Dorsolateral prefrontal cortex (tissue), 120 donors: ENCODE measurements at regions of chrX and their contacts with region 1.

Region 1: GRCh38 chrX:103686199-103687072 is at the start of gene MORF4L2:
- DNase-seq: peak; percentile 45 to 93 (median 88)
- H3K4me3 ChIP-seq: peak within 1 kb of the TSS; percentile 39 to 81 (median 67)
- H3K27ac ChIP-seq: peak within 1 kb of the TSS; percentile 92 to 100 (median 99)
- H3K27me3 ChIP-seq: peaks cover 0 to 47% (median 6%) of the 10 kb centered on the region in 45 donors
- CTCF ChIP-seq: no peak
- total RNA-seq, gene MORF4L2: 141 to 473 (median 331) TPM

Region 2: DNA sequence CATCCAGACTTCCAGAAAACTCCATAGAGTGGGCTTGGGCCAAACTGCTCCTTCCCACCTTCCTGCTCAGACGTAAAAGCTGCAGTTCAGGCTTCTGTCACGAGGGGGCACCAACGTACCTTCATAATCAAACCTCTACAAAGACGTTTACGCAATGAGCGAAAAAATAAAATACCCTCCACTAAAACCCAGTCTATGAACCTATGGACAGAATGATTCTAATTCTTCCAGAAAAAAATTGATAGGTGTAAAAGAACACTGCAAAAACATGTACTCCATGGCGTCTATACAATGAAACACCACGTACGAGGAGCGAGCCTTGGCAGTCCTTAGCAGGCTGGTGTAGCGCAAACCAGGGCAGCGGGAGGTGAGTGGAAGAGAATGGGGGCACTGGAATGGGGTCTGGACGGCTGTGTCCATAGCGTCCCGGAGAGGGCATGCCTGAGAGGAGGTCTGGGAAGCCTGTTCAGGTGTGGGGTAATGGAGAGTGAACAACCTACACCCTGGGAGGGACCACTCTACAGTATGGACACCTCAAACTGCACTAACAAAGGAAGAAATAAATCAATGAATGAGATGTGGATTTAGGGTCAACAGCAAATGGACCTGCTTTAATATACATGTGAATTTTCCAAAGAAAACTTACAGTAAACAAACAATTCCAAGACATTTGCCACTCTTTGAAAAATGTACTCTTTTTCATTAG is 152.8 kb before region 1 on chrX:
- intact Hi-C with region 1: loop called (anchors 2 to 5 kb)
- DNase-seq: peak; percentile 64 to 91 (median 79)
- H3K4me3 ChIP-seq: peak overlapping the region; percentile 18 to 67 (median 51)
- H3K27ac ChIP-seq: peak overlapping the region in 36 of 59 donors; percentile 4 to 83 (median 52)
- H3K27me3 ChIP-seq: peaks cover 0 to 87% (median 17%) of the 10 kb centered on the region in 45 donors
- CTCF ChIP-seq: peak; percentile 34 to 94 (median 82)

Region 3: DNA sequence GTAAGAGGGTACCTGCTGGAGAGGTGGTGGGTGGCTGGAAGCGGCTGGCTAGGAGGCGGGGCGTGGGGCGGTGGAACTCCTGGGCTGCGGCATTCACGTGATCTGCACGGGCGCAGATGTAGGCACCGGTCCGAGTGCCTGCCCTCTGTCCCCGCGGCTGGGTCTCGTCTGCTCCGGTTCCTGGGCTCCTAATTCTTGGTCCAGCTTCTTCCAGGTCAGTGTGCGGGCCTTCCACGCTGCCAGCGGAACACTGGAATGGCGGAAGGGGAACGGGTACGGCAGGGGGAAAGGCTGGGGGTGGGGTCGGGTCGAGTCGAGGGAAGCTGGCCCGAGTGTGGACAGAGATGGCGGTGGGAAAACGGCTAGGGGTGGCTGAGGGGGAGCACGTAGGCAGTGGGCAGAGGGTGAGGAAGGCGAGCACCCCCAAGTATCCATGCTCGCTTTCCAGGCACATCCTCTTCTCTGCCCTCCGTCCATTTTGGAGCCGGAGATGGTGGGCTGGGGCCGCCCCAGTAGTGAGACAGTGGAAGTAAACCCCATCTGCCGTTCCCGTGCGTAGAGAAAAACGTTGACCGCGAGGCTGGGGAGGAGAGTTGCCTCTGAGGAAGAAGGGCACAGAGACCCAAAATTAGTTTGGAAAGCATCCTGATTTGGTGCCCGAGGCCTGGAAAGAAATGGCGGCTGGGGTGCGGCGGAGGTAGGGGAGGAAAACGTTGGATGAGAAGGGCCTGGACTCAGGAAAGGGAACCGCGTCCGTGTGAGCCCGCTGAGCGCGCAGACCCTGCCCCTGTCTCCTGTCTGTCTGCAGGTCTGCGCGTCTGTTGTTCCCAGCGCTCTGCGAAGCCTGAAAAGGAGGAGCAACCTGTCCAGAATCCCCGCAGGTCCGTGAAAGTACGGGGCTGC is 100.8 kb before region 1 on chrX and contains the start of gene TCEAL4:
- intact Hi-C with region 1: loop called in 1 of 2 experiments (anchors 10 kb)
- DNase-seq: peak; percentile 54 to 83 (median 68)
- H3K4me3 ChIP-seq: peak within 1 kb of the TSS; percentile 16 to 80 (median 64)
- H3K27ac ChIP-seq: peak within 1 kb of the TSS; percentile 41 to 92 (median 86)
- H3K27me3 ChIP-seq: peaks cover 0 to 33% (median 0%) of the 10 kb centered on the region in 45 donors
- CTCF ChIP-seq: no peak
- total RNA-seq, gene TCEAL4: 75.8 to 142 (median 106) TPM

Region 4: DNA sequence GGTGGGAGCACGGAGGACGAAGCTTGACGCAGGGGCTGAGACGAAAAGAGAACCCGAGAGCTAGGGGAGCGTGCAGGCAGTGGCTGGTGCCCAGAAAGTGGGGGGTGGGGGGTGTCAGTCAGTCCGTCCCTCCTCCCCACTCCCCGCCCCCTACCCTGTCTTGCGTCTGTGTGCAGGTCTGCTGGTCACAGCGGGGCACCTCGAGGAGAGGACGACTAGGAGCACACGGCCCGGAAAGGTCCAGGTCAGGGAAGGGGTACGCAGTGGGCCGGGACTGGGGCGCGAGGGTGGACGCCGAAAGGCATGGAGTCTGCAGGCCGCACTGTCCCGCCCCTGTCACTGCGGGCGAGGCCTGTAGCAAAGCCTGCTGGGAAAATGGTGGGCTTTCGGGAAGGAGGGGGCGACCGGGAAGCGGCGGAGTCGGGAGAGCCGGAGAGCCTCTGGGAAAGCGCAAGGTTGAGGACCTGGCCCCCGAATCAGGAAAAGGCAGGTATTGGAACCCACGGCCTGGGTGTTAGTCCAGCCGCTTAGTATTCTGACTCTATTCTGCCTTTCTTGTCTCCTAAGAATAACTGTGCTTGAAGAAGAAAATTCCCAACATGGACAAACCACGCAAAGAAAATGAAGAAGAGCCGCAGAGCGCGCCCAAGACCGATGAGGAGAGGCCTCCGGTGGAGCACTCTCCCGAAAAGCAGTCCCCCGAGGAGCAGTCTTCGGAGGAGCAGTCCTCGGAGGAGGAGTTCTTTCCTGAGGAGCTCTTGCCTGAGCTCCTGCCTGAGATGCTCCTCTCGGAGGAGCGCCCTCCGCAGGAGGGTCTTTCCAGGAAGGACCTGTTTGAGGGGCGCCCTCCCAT is 56.9 kb before region 1 on chrX:
- intact Hi-C with region 1: loop called (anchors 10 kb)
- DNase-seq: peak; percentile 48 to 77 (median 67)
- H3K4me3 ChIP-seq: peak overlapping the region; percentile 45 to 76 (median 64)
- H3K27ac ChIP-seq: peak overlapping the region; percentile 80 to 98 (median 94)
- H3K27me3 ChIP-seq: peaks cover 0 to 71% (median 17%) of the 10 kb centered on the region in 45 donors
- CTCF ChIP-seq: peak in 55 of 56 donors; percentile 29 to 70 (median 56)

Region 5: DNA sequence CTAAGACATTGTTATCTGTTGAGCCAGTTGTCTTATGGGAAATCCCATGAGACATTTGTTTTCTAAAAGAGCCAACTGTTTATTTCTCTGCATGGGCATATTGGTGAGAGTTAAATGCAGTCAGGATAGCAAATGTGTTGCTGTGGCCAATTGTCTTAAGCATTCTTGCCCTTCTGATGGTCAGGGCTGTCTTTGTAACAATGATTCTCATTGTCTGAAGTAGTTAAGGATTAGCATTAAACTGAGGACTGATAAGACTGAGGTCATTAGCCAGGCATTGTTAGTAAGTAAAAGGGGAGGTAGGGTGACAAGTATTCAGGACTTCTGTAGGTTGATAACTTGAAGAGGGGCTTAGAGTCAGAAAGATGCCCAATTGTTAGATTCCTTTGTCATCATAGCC is 11.3 kb after region 1 on chrX:
- intact Hi-C with region 1: no loop called
- DNase-seq: no peak
- H3K4me3 ChIP-seq: no peak overlapping the region
- H3K27ac ChIP-seq: peak overlapping the region in 55 of 59 donors; percentile 3 to 100 (median 97)
- H3K27me3 ChIP-seq: peaks cover 0 to 59% (median 6%) of the 10 kb centered on the region in 45 donors
- CTCF ChIP-seq: no peak

Region 6: DNA sequence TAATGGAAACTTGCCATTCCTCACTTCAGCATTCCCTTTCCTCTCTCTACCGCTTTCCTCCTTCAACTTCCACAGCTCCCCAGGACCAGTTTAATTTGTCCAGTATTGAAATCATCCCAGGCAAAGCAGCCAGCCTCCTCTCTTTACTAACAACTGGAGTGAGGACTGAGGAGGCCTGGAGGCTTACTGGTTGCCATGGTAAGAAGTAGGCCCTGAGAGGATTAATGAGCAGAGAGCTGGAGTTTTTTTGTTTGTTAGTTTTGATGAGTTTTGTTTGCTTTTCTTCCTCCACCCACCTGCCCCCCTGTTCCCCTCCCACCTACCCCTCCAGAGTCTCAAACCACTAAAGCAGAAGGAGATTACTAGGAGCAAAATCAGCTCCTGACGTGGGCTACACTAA is 60.7 kb after region 1 on chrX:
- intact Hi-C with region 1: no loop called
- DNase-seq: no peak
- H3K4me3 ChIP-seq: no peak overlapping the region
- H3K27ac ChIP-seq: no peak overlapping the region
- H3K27me3 ChIP-seq: peaks cover 0 to 68% (median 11%) of the 10 kb centered on the region in 45 donors
- CTCF ChIP-seq: no peak

Region 7: GRCh38 chrX:103774070-103774642 is 87.7 kb after region 1 on chrX:
- intact Hi-C with region 1: loop called in 1 of 2 experiments (anchors 1 kb)
- DNase-seq: peak in 5 of 10 donors; percentile 18 to 47 (median 41)
- H3K4me3 ChIP-seq: peak overlapping the region in 36 of 59 donors; percentile 0 to 75 (median 58)
- H3K27ac ChIP-seq: peak overlapping the region in 58 of 59 donors; percentile 49 to 97 (median 86)
- H3K27me3 ChIP-seq: peaks cover 0 to 76% (median 5%) of the 10 kb centered on the region in 45 donors
- CTCF ChIP-seq: peak in 55 of 56 donors; percentile 11 to 74 (median 57)

Region 8: GRCh38 chrX:103817502-103817901 is 131.1 kb after region 1 on chrX:
- intact Hi-C with region 1: loop called (anchors 1 to 2 kb)
- DNase-seq: peak in 1 of 10 donors; percentile 8
- H3K4me3 ChIP-seq: no peak overlapping the region
- H3K27ac ChIP-seq: no peak overlapping the region
- H3K27me3 ChIP-seq: peaks cover 0 to 48% (median 3%) of the 10 kb centered on the region in 45 donors
- CTCF ChIP-seq: peak; percentile 54 to 98 (median 86)